ENCODE measurements at regions of chr18 and their contacts with region 1.

Region 1: GRCh38 chr18:50266248-50266704 is at the start of gene CFAP53:
- DNase-seq: peak; percentile 96
- ATAC-seq: peak; percentile 79
- H3K4me3 ChIP-seq: peak within 1 kb of the TSS; percentile 55 to 78 (median 66)
- H3K4me3 Mint-ChIP-seq: peak within 1 kb of the TSS; percentile 93
- H3K27ac ChIP-seq: peak within 1 kb of the TSS; percentile 57 to 81
- H3K27ac Mint-ChIP-seq: peak within 1 kb of the TSS; percentile 93
- H3K4me1 ChIP-seq: peaks cover 15 to 28% of the 10 kb centered on the region in 2 donors
- H3K4me1 Mint-ChIP-seq: peaks cover 23% of the 10 kb centered on the region
- H3K27me3 ChIP-seq: no peaks in the 10 kb centered on the region
- H3K27me3 Mint-ChIP-seq: no peaks in the 10 kb centered on the region
- CTCF ChIP-seq: no peak
- total RNA-seq, gene CFAP53: 0.75 and 0.79 TPM in 2 replicates

Region 2: DNA sequence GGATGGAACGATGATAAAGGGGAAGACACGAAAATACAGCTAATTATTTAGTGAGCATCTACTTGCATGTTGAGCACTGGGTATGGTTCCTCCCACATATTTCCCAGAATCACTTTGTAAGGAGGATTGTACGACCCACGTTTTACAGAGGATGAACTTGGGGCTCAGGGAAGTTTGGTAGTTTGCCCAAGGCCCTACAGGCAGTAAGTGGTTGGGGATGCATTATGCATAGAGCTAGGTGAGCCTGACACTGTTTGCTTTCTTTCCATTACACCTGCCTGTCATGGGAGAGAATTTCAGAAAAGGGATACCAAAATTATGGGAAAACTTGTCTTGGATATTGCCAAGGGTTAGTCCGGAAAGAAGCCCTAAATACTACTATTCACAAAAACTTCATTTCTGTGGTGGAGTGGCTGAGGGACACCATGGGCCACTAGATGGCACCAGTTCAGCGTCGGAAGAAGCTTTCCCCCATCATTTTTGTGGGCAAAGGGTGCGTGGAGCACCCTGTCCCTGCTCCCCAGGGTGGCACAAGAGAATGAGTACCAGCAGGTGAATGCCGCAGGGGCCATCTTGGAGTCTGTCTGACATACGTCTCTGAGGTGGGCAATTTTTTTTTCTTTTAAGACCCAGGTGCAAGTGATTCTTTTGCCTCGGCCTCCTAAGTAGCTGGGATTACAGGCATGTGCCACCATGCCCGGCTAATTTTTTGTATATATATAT is 755.7 kb before region 1 on chr18:
- CTCF ChIA-PET with region 1: interaction called, 6 read pairs
- POLR2A ChIA-PET with region 1: no interaction called
- intact Hi-C with region 1: loop called (anchors 5 kb)
- DNase-seq: peak; percentile 70
- ATAC-seq: peak; percentile 39
- H3K4me3 ChIP-seq: no peak overlapping the region
- H3K4me3 Mint-ChIP-seq: no peak overlapping the region
- H3K27ac ChIP-seq: no peak overlapping the region
- H3K27ac Mint-ChIP-seq: no peak overlapping the region
- H3K4me1 ChIP-seq: no peaks in the 10 kb centered on the region
- H3K4me1 Mint-ChIP-seq: no peaks in the 10 kb centered on the region
- H3K27me3 ChIP-seq: peaks cover 0 to 3% (median 0%) of the 10 kb centered on the region in 4 experiments
- H3K27me3 Mint-ChIP-seq: peaks cover 22% of the 10 kb centered on the region
- CTCF ChIP-seq: peak; percentile 82

Region 3: GRCh38 chr18:50194631-50195532 is 71.4 kb before region 1 on chr18 and contains the start of gene MYO5B:
- CTCF ChIA-PET with region 1: interaction called, 5 read pairs
- POLR2A ChIA-PET with region 1: no interaction called
- intact Hi-C with region 1: loop called (anchors 2 kb)
- DNase-seq: peak; percentile 83
- ATAC-seq: peak; percentile 87
- H3K4me3 ChIP-seq: peak within 1 kb of the TSS in 4 of 5 experiments; percentile 32 to 60 (median 50)
- H3K4me3 Mint-ChIP-seq: peak within 1 kb of the TSS; percentile 68
- H3K27ac ChIP-seq: no peak within 1 kb of the TSS
- H3K27ac Mint-ChIP-seq: no peak within 1 kb of the TSS
- H3K4me1 ChIP-seq: peaks cover 24 to 30% of the 10 kb centered on the region in 2 donors
- H3K4me1 Mint-ChIP-seq: peaks cover 16% of the 10 kb centered on the region
- H3K27me3 ChIP-seq: peaks cover 0 to 43% (median 29%) of the 10 kb centered on the region in 4 experiments
- H3K27me3 Mint-ChIP-seq: peaks cover 61% of the 10 kb centered on the region
- CTCF ChIP-seq: peak; percentile 22
- total RNA-seq, gene MYO5B: 0.24 and 0.30 TPM in 2 replicates

Region 4: GRCh38 chr18:50281295-50281971 is 15.2 kb after region 1 on chr18 and contains the start of gene MBD1:
- CTCF ChIA-PET with region 1: interaction called, 44 read pairs
- POLR2A ChIA-PET with region 1: interaction called, 10 read pairs
- intact Hi-C with region 1: loop called (anchors 1 kb)
- DNase-seq: peak; percentile 100
- ATAC-seq: peak; percentile 92
- H3K4me3 ChIP-seq: peak within 1 kb of the TSS; percentile 92 to 99 (median 99)
- H3K4me3 Mint-ChIP-seq: peak within 1 kb of the TSS; percentile 97
- H3K27ac ChIP-seq: peak within 1 kb of the TSS; percentile 81 to 87
- H3K27ac Mint-ChIP-seq: peak within 1 kb of the TSS; percentile 97
- H3K4me1 ChIP-seq: peaks cover 30 to 34% of the 10 kb centered on the region in 2 donors
- H3K4me1 Mint-ChIP-seq: peaks cover 39% of the 10 kb centered on the region
- H3K27me3 ChIP-seq: no peaks in the 10 kb centered on the region
- H3K27me3 Mint-ChIP-seq: no peaks in the 10 kb centered on the region
- CTCF ChIP-seq: no peak
- total RNA-seq, gene MBD1: 120 and 132 TPM in 2 replicates

Region 5: GRCh38 chr18:50307738-50308470 is 41.6 kb after region 1 on chr18:
- CTCF ChIA-PET with region 1: interaction called, 3 read pairs
- POLR2A ChIA-PET with region 1: no interaction called
- intact Hi-C with region 1: loop called (anchors 1 kb)
- DNase-seq: peak; percentile 92
- ATAC-seq: peak; percentile 98
- H3K4me3 ChIP-seq: peak overlapping the region; percentile 30 to 70 (median 61)
- H3K4me3 Mint-ChIP-seq: peak overlapping the region; percentile 99
- H3K27ac ChIP-seq: peak overlapping the region; percentile 3 to 56
- H3K27ac Mint-ChIP-seq: peak overlapping the region; percentile 87
- H3K4me1 ChIP-seq: peaks cover 33 to 42% of the 10 kb centered on the region in 2 donors
- H3K4me1 Mint-ChIP-seq: peaks cover 38% of the 10 kb centered on the region
- H3K27me3 ChIP-seq: peaks cover 0 to 2% (median 0%) of the 10 kb centered on the region in 4 experiments
- H3K27me3 Mint-ChIP-seq: peaks cover 4% of the 10 kb centered on the region
- CTCF ChIP-seq: no peak

Region 6: DNA sequence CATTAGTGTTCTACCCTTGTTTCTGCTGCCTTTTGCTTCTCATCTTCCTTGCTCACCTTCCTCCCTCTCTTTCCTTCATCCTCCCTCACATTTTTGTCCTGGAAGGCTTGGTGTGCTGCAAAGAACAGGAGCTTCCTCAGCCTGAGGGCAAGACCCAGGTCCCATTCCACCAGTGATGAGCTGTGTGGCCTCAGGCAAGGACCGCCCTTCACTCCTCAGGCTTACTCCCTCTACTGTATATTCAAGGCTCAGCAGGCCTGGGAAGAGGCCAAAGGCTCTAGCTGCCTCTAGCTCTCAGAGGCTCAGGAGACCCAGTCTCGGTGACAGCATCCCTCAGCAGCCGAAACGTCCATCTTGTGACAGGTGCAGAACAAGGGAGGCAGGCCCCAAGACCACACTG is 456.0 kb after region 1 on chr18:
- CTCF ChIA-PET with region 1: no interaction called
- POLR2A ChIA-PET with region 1: no interaction called
- intact Hi-C with region 1: no loop called
- DNase-seq: no peak
- ATAC-seq: no peak
- H3K4me3 ChIP-seq: no peak overlapping the region
- H3K4me3 Mint-ChIP-seq: no peak overlapping the region
- H3K27ac ChIP-seq: no peak overlapping the region
- H3K27ac Mint-ChIP-seq: no peak overlapping the region
- H3K4me1 ChIP-seq: no peaks in the 10 kb centered on the region
- H3K4me1 Mint-ChIP-seq: no peaks in the 10 kb centered on the region
- H3K27me3 ChIP-seq: no peaks in the 10 kb centered on the region
- H3K27me3 Mint-ChIP-seq: peaks cover 19% of the 10 kb centered on the region
- CTCF ChIP-seq: no peak

Measured in B cell (primary cell).